ENCODE measurements at regions of chr6 and their contacts with region 1.

Region 1: GRCh38 chr6:105601541-105602236 is 198.8 kb upstream of the PREP start:
- DNase-seq: peak; percentile 67
- H3K4me3 Mint-ChIP-seq: peak overlapping the region; percentile 47
- H3K27ac Mint-ChIP-seq: peak overlapping the region; percentile 82
- H3K4me1 Mint-ChIP-seq: peaks cover 35% of the 10 kb centered on the region
- H3K27me3 Mint-ChIP-seq: no peaks in the 10 kb centered on the region

Region 2: DNA sequence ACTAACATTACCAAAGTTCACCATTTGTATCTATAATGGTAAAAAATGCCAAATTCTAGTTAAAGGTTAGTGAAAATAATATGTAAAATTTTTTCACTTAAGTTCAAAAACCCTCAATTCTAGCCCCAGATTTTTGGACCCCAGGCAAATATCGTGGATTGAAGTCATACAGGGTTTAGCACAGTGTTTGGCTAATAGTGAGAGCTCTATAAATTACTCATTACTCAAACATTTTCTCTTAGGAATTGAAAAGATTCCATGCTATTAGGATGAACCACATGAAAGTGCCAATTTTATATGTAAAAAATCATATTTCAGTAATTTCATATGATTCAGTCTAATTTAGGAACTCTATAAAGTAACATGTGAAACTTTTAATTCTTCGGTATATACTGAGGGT is 28.6 kb before region 1 on chr6:
- CTCF ChIA-PET with region 1: no interaction called
- POLR2A ChIA-PET with region 1: no interaction called
- DNase-seq: no peak
- H3K4me3 Mint-ChIP-seq: no peak overlapping the region
- H3K27ac Mint-ChIP-seq: no peak overlapping the region
- H3K4me1 Mint-ChIP-seq: peaks cover 10% of the 10 kb centered on the region
- H3K27me3 Mint-ChIP-seq: peaks cover 12% of the 10 kb centered on the region

Region 3: DNA sequence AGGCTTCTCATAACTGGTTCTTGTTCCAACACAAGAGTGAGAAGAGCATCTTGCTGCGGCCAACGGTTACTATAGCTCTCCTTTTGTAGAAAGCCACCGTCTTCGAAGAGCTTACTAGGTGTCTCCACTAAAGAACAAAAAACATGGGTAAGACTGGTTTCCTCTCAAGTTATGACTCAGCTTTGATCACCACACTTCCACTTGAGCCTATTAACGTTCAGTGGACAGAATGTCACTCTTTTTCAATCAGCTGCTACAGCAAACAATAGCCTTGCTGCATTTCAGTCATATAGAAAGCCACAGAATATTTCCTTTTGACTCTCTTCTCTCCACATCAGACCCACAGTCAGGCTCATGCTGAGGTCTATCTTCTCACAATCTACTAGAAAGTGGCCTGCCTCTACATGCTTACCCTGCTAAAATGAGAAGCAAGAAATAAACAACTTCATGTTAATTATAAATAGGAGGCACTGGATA is 44.7 kb after region 1 on chr6:
- CTCF ChIA-PET with region 1: interaction called, 4 read pairs
- POLR2A ChIA-PET with region 1: interaction called, 15 read pairs
- DNase-seq: peak; percentile 77
- H3K4me3 Mint-ChIP-seq: peak overlapping the region; percentile 40
- H3K27ac Mint-ChIP-seq: peak overlapping the region; percentile 98
- H3K4me1 Mint-ChIP-seq: peaks cover 86% of the 10 kb centered on the region
- H3K27me3 Mint-ChIP-seq: no peaks in the 10 kb centered on the region

Measured in activated CD4-positive, alpha-beta memory T cell treated with anti-CD3 and anti-CD28 coated beads, Interleukin-2, amount 10 ng/mL, durations not matched to agents 7 days and 5 days (primary cell).